Caco-2 (cell line): ENCODE measurements at regions of chr2 and their contacts with region 1.

Region 1: DNA sequence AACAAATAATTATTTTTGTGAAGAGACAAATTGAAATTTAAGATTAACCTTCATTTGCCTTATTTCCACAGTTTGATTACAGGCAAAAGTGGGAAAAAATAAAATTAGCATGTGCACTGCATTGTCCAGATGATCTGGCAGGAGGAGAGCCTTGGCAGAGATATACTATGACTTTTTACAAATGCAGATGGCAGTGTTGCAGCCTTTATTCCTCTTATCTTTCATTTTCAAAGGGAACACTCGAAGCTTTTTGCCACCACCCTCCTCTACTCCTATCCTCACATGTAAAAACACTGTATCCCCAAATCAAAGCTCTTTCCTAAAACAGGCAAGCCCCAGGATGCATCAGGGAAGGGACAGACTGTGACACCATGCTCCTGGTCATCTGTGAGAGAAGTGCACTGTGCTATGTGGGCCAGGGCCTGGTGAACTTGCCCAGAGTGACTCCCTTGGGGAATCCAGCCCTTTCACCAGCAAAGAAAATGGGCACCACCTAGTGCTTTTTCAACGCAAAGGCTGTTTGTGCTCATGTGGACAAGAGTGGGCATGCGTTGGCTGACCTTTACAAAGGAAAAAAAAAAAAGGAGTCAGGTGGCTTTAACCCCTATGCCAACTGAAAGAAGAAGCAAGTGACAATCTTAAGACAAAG is 74.7 kb upstream of the ETAA1 start:
- DNase-seq: peak; percentile 59 to 64
- H3K4me3 ChIP-seq: no peak overlapping the region
- H3K4me3 Mint-ChIP-seq: no peak overlapping the region
- H3K27ac Mint-ChIP-seq: no peak overlapping the region
- H3K4me1 ChIP-seq: no peaks in the 10 kb centered on the region
- H3K4me1 Mint-ChIP-seq: no peaks in the 10 kb centered on the region
- H3K27me3 ChIP-seq: no peaks in the 10 kb centered on the region
- H3K27me3 Mint-ChIP-seq: peaks cover 6% of the 10 kb centered on the region
- CTCF ChIP-seq: peak; percentile 39 to 64

Region 2: GRCh38 chr2:66587216-66587615 is 735.3 kb before region 1 on chr2:
- CTCF ChIA-PET with region 1: no interaction called
- POLR2A ChIA-PET with region 1: no interaction called
- intact Hi-C with region 1: loop called (anchors 1 kb)
- DNase-seq: peak; percentile 55 to 60
- H3K4me3 ChIP-seq: no peak overlapping the region
- H3K4me3 Mint-ChIP-seq: no peak overlapping the region
- H3K27ac Mint-ChIP-seq: no peak overlapping the region
- H3K4me1 ChIP-seq: no peaks in the 10 kb centered on the region
- H3K4me1 Mint-ChIP-seq: no peaks in the 10 kb centered on the region
- H3K27me3 ChIP-seq: no peaks in the 10 kb centered on the region; the same call in 1 of the 2 replicates
- H3K27me3 Mint-ChIP-seq: no peaks in the 10 kb centered on the region
- CTCF ChIP-seq: peak in 1 of 2 experiments; percentile 69

Region 3: DNA sequence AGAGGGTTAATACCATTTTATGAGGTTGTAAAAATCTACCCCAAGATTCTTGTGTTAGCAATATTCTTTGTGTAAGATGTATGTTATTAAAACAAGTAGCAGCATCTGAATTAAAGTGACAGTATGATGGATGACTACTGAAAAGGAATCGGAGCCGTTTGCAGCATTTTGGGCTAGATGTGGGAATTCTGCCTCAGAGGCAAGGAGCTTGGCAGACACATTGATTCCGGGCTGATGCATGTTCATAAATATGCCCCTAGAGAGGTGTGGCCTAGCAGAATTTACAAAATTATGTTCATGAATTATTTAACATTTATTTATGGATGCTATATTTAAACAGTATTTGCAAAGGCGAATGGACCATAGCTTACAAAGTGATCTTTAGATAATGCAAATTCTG is 314.3 kb before region 1 on chr2:
- CTCF ChIA-PET with region 1: no interaction called
- POLR2A ChIA-PET with region 1: no interaction called
- intact Hi-C with region 1: loop called (anchors 1 kb)
- DNase-seq: no peak
- H3K4me3 ChIP-seq: no peak overlapping the region
- H3K4me3 Mint-ChIP-seq: no peak overlapping the region
- H3K27ac Mint-ChIP-seq: peak overlapping the region; percentile 90
- H3K4me1 ChIP-seq: peaks cover 21% of the 10 kb centered on the region
- H3K4me1 Mint-ChIP-seq: peaks cover 15% of the 10 kb centered on the region
- H3K27me3 ChIP-seq: no peaks in the 10 kb centered on the region
- H3K27me3 Mint-ChIP-seq: no peaks in the 10 kb centered on the region
- CTCF ChIP-seq: no peak

Region 4: GRCh38 chr2:67277450-67277849 is 45.0 kb before region 1 on chr2:
- CTCF ChIA-PET with region 1: no interaction called
- POLR2A ChIA-PET with region 1: no interaction called
- intact Hi-C with region 1: loop called (anchors 1 kb)
- DNase-seq: peak; percentile 20 to 35
- H3K4me3 ChIP-seq: no peak overlapping the region
- H3K4me3 Mint-ChIP-seq: no peak overlapping the region
- H3K27ac Mint-ChIP-seq: no peak overlapping the region
- H3K4me1 ChIP-seq: no peaks in the 10 kb centered on the region
- H3K4me1 Mint-ChIP-seq: no peaks in the 10 kb centered on the region
- H3K27me3 ChIP-seq: no peaks in the 10 kb centered on the region
- H3K27me3 Mint-ChIP-seq: peaks cover 3% of the 10 kb centered on the region
- CTCF ChIP-seq: peak in 1 of 2 experiments; percentile 25